ENCODE measurements at regions of chr9 and their contacts with region 1.

Region 1: GRCh38 chr9:15422372-15423230 is at the start of gene SNAPC3:
- H3K4me3 Mint-ChIP-seq: peak within 1 kb of the TSS; percentile 94
- H3K27ac Mint-ChIP-seq: peak within 1 kb of the TSS; percentile 91
- H3K4me1 Mint-ChIP-seq: peaks cover 30% of the 10 kb centered on the region
- H3K27me3 Mint-ChIP-seq: no peaks in the 10 kb centered on the region

Region 2: DNA sequence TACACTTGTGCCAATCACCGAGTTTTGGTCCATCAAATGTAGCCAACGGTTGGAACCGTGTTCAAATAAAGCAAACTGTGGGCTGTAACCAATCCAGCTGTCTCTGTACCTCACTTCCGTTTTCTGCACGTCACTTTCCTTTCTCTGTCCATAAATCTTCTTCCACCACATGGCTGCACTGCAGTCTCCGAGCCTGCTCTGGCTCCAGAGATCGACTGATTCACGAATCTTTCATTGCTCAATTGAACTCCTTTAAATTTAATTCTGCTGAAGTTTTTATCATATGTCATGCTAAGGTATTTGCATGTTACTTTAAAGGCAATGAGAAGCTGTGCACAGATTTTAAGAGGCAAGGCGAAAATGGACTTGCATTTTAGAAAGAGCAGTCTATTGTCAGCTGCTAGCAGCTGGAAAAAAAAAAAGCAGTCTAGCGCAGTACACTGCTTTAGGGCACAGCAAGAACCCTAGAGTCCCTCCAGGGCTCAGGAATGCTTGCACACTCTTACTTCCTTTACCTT is 128.7 kb before region 1 on chr9:
- intact Hi-C with region 1: loop called (anchors 5 kb)
- H3K4me3 Mint-ChIP-seq: no peak overlapping the region
- H3K27ac Mint-ChIP-seq: peak overlapping the region; percentile 8
- H3K4me1 Mint-ChIP-seq: peaks cover 23% of the 10 kb centered on the region
- H3K27me3 Mint-ChIP-seq: no peaks in the 10 kb centered on the region

Region 3: GRCh38 chr9:15306757-15307534 is 115.7 kb before region 1 on chr9 and contains the start of gene TTC39B:
- intact Hi-C with region 1: loop called (anchors 2 kb)
- H3K4me3 Mint-ChIP-seq: peak within 1 kb of the TSS; percentile 99
- H3K27ac Mint-ChIP-seq: peak within 1 kb of the TSS; percentile 92
- H3K4me1 Mint-ChIP-seq: peaks cover 32% of the 10 kb centered on the region
- H3K27me3 Mint-ChIP-seq: peaks cover 14% of the 10 kb centered on the region

Region 4: DNA sequence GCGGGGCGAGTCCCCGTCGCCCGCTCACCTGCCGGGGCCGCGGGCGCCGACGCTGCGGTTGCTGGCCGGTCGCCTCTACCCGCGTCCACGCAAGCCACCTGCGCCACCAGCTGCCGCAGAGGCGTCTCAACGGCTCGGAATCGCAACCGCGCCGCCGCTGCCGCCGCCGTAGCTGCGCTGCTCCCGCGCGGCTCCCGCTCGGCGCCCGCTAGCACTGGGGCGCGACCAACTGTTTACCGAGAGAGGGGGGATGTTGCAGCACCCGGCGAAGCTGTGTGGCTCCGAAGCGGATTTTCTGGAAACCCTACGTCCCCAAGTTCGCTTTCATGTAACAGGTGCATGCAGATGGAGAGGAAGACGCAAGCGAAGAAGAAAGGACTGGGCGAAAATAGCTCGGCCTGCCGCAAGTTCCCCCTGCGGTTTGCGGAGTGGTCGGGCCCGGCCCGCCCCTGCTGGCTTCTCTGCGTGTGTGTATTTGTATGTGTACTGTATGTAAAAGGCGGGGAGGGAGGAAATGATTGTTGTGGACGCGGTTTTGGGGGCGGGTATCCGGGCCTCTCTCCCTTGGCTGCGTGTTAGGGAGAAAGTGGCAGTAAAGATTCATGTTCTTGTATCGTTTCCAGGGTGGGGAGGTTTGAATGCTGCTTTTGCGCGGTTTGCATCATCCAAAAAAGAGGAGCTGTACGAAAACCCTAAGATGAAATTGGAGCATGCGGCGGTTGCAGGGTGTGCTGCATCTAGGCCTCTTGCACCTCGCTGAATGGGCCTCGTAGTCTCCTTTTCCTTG is 88.4 kb after region 1 on chr9 and contains the start of gene PSIP1:
- intact Hi-C with region 1: loop called (anchors 1 kb)
- H3K4me3 Mint-ChIP-seq: peak within 1 kb of the TSS; percentile 92
- H3K27ac Mint-ChIP-seq: peak within 1 kb of the TSS; percentile 99
- H3K4me1 Mint-ChIP-seq: peaks cover 47% of the 10 kb centered on the region
- H3K27me3 Mint-ChIP-seq: no peaks in the 10 kb centered on the region

Region 5: DNA sequence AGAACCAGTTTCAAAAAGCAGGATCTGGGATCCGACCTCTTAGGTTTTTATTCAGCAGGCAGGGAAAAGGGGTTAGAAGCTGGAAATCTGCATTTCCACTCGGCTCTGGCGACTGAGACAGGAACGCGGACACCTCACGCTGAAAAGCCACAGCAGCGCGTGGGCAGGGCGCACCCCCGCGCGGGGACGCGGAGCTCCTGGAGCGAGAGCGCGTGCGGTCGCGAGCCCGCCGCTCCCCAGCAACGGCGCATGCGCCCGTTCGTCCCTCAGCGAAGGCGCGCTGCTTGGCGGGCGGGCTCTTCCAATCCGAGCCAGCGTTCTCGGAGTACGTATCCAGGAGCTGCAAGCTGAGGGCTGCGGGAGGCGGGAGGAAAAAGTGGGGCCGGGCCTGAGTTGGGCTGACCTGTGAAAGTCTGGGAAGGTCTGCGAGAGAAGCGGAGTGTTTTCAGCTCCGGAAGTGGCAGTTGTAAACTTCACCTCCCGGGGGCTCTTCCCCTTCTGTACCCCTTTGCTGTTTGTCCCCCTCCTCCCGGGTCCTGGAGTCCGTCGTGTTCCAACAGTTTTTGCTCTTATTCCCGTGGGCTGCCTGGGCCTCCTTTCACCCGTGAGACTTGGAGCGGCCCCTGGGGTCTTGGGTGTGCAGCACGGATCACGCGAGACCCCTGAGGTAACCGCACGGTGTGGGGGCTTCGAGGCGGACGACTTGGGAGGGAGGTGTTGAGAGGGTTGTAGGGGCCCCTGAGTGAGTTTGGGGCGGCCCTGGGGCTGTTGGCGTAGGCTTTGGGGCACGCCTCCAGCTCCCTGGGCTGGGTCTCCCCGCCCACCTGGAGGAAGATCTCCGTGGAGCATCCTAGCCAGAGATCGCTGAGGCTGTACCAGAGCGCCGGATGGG is 130.3 kb after region 1 on chr9 and contains the start of gene CCDC171:
- intact Hi-C with region 1: loop called (anchors 5 kb)
- H3K4me3 Mint-ChIP-seq: peak within 1 kb of the TSS; percentile 91
- H3K27ac Mint-ChIP-seq: peak within 1 kb of the TSS; percentile 87
- H3K4me1 Mint-ChIP-seq: peaks cover 22% of the 10 kb centered on the region
- H3K27me3 Mint-ChIP-seq: peaks cover 6% of the 10 kb centered on the region